ENCODE measurements at regions of chr19 and their contacts with region 1.

Region 1: GRCh38 chr19:39679791-39680168 is 24.1 kb downstream of the LGALS16 start:
- DNase-seq: peak; percentile 17
- CTCF ChIP-seq: no peak

Region 2: GRCh38 chr19:39759457-39760184 is 79.8 kb after region 1 on chr19:
- in situ Hi-C with region 1: loop called (anchors 5 kb)
- DNase-seq: no peak
- CTCF ChIP-seq: no peak

Region 3: GRCh38 chr19:39792999-39793546 is 113.3 kb after region 1 on chr19:
- in situ Hi-C with region 1: no loop called
- DNase-seq: peak; percentile 86
- CTCF ChIP-seq: peak; percentile 84

Measured in GM13976 (cell line).